ENCODE measurements at regions of chr22 and their contacts with region 1.

Region 1: GRCh38 chr22:38872172-38872830 is at the start of gene CBX6:
- DNase-seq: peak; percentile 97
- ATAC-seq: peak; percentile 55
- H3K4me3 Mint-ChIP-seq: peak within 1 kb of the TSS; percentile 93
- H3K27ac Mint-ChIP-seq: peak within 1 kb of the TSS; percentile 94
- H3K4me1 Mint-ChIP-seq: peaks cover 58% of the 10 kb centered on the region
- H3K27me3 Mint-ChIP-seq: no peaks in the 10 kb centered on the region
- total RNA-seq, gene CBX6: 96.1 to 112 TPM

Region 2: DNA sequence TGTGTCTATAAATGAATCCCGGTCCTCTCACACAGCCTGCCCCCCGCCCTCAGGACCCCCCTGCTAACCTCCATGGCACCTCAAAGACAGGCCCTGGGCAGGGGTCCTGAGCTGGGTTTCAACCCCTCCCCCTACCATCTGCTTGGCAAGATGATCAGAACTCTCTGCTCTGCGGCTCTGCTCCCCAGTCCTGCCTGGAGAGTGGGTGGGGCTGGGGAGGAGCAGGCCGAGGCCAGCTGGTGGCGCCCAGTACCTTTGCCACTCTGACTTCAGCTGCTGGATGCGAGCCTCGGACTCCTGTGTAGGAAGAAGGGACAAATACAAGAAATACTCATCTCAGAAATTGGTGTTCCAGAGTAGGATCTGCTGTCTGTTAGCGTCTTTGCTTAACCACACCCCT is 131.5 kb before region 1 on chr22:
- CTCF ChIA-PET with region 1: no interaction called
- POLR2A ChIA-PET with region 1: no interaction called
- intact Hi-C with region 1: no loop called
- DNase-seq: no peak
- ATAC-seq: no peak
- H3K4me3 Mint-ChIP-seq: no peak overlapping the region
- H3K27ac Mint-ChIP-seq: no peak overlapping the region
- H3K4me1 Mint-ChIP-seq: peaks cover 25% of the 10 kb centered on the region
- H3K27me3 Mint-ChIP-seq: no peaks in the 10 kb centered on the region

Region 3: DNA sequence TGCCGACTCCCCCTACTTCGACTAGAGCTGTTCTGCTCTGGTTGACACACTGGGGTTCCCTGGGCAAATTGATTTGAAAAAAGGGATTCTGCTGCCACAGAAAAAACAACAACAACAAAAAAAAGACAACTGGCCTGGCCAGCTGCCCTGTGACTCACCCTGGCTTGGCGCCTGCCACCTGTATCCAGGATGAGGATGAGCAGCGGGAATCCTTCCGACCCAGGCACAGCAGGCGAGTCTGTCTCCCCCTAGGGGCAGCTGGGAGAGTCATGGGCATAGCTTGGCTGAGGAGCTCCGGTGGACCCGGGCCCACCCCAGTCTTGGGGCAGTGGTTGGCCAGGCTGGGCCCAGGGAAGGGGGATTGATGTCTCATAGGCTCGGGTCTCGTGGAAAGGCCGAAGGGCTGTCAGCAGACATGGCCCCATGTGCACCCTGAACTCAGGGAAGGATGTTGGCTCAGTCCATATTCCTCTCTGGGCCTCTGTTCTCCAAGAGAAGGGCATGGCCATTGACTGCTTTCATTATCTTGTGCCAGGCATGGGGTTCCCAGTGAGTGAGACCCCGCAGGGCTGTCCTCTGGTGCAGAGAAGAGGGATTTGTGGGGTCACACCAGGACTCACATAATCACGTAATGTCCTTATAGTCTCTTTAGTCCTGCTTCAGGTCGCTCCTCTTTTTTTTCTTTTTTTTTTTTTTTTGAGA is 106.1 kb before region 1 on chr22:
- CTCF ChIA-PET with region 1: interaction called, 17 read pairs
- POLR2A ChIA-PET with region 1: no interaction called
- intact Hi-C with region 1: no loop called
- DNase-seq: peak; percentile 60
- ATAC-seq: peak; percentile 38
- H3K4me3 Mint-ChIP-seq: no peak overlapping the region
- H3K27ac Mint-ChIP-seq: no peak overlapping the region
- H3K4me1 Mint-ChIP-seq: peaks cover 4% of the 10 kb centered on the region
- H3K27me3 Mint-ChIP-seq: no peaks in the 10 kb centered on the region

Region 4: DNA sequence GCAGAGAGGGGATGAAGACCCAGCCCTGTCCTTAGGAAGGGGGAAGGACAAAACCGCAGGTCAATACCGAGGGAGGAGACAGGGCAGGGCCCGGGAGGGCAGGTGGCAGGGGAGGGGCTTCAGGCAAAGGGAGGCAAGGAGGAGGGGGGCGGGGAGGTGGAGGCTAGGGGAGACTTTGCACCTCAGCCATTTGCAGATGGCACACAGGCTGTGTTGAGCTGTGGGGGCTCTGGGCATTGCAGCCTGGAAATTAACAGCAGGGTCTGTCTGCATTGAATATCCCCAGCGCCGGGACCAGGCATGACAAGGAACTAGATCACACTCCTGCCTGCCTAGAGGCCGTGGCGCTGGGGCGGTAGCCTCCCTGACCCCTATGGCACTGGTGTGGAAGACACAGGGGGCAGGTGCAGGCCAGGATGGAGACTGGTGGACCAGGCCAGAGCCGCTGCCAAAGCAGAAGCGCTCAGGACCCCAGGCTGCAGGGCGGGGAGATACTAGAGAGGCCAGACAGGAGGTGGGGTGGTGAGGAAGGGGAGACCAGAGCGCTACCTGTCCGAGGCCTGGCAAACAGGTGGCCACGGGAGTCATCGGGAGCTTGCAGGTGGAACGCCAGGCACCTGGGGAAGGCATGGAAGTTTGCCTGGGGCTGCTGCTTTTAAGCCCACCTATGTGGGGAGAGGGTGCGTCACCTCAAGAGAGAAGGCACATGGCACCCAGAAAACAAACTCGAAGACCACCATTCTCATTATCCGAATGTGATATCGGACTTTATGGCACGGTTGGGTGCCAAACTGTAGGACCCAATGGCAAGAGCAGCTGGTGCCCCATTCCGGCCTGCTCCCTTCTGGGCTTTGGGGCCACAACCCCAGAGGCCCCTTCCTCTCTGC is 11.8 kb before region 1 on chr22:
- CTCF ChIA-PET with region 1: interaction called, 26 read pairs
- POLR2A ChIA-PET with region 1: no interaction called
- intact Hi-C with region 1: no loop called
- DNase-seq: no peak
- ATAC-seq: peak; percentile 14
- H3K4me3 Mint-ChIP-seq: no peak overlapping the region
- H3K27ac Mint-ChIP-seq: no peak overlapping the region
- H3K4me1 Mint-ChIP-seq: no peaks in the 10 kb centered on the region
- H3K27me3 Mint-ChIP-seq: no peaks in the 10 kb centered on the region

Region 5: DNA sequence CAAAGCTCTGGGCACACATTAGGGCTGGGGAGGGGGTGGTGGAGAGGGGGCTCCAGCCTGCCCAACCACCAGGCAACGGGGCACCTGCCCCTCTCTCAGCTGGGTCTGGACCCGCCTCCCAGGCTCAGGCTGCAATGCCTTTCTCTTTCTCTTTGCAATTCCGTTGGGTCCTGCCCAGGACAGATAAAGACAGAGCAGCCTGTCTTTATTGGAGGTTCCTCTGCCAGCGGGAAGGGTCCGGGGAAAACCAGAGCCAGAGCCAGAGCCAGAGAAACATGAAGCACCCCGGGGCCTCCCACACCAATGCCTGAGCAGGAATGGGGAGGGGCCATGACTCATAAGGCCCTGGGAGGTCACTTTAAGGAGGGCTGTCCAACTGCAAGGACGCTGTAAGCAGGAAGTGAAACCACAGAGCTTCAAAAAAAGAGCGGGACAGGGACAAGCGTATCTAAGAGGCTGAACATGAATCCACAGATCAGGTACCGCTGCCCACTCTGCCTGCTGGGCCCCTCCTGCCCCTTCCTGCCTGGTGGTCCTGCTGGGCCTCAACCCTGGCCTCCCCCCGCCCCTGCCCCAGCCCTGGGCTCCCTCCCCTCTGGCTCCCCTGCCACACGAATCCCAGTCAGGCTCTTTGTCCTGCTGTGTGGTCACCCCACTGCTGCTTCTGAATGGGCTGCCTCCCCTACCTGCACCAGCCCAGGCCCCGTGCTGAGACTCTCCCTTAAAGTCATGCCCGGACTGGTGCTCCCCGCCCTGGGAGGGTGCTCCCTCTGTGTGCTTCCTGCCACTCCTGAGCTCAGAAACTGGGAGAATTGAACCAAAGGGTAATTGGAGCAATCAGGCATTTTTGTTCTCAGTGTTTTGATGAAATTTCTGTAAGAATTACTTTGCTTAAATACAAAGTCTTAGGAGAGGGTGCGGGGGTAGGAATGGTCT is 110.0 kb after region 1 on chr22 and contains the start of gene APOBEC3B:
- CTCF ChIA-PET with region 1: interaction called, 22 read pairs
- POLR2A ChIA-PET with region 1: interaction called, 4 read pairs
- intact Hi-C with region 1: loop called (anchors 1 kb)
- DNase-seq: peak; percentile 82
- ATAC-seq: peak; percentile 57
- H3K4me3 Mint-ChIP-seq: peak within 1 kb of the TSS; percentile 55
- H3K27ac Mint-ChIP-seq: peak within 1 kb of the TSS; percentile 74
- H3K4me1 Mint-ChIP-seq: peaks cover 53% of the 10 kb centered on the region
- H3K27me3 Mint-ChIP-seq: peaks cover 3% of the 10 kb centered on the region
- total RNA-seq, gene APOBEC3B: 8.0 to 8.5 TPM

Region 6: GRCh38 chr22:39080052-39080762 is 207.9 kb after region 1 on chr22:
- CTCF ChIA-PET with region 1: no interaction called
- POLR2A ChIA-PET with region 1: no interaction called
- intact Hi-C with region 1: loop called in 1 of 2 experiments (anchors 5 kb)
- DNase-seq: peak; percentile 4
- ATAC-seq: no peak
- H3K4me3 Mint-ChIP-seq: no peak overlapping the region
- H3K27ac Mint-ChIP-seq: no peak overlapping the region
- H3K4me1 Mint-ChIP-seq: peaks cover 39% of the 10 kb centered on the region
- H3K27me3 Mint-ChIP-seq: no peaks in the 10 kb centered on the region

Region 7: DNA sequence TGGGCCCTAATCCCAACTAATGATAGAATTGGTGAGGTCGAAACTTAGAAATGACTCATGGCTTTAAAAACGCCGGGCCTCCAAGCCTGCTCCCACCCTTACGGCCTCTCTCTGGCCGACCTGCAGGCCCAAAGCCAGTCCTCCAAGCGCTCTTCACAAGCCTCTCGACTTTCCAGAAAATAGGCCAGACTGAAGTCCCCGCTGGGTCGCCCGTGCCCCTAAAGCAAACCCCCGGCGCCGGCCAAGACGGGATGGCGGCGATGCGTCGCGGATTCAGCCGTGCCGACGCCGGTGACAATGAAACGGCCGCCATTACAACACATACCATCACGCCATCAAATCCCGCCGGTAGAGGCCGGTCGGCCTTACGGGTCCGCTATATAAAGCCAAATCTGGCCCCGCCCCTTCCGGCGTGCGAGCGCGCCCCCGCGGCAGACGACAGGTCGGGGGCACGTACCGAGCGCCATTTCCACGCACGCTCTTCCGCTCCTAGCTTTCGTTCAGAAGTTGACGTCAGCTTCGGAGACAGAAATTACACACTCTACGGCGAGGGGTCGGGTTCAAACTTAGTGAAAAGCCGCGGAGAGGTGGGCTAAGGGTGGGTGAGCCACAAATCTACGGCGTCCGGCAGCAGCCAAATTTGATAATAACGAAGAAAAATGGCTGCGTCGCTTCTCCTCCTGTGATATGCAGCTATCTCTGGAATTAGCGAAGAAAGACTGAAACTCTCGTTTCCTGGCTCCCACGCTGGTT is 447.1 kb after region 1 on chr22 and contains the start of gene RPL3:
- CTCF ChIA-PET with region 1: interaction called, 3 read pairs
- POLR2A ChIA-PET with region 1: interaction called, 10 read pairs
- intact Hi-C with region 1: loop called (anchors 1 to 5 kb)
- DNase-seq: peak; percentile 98
- ATAC-seq: peak; percentile 83
- H3K4me3 Mint-ChIP-seq: peak within 1 kb of the TSS; percentile 100
- H3K27ac Mint-ChIP-seq: peak within 1 kb of the TSS; percentile 100
- H3K4me1 Mint-ChIP-seq: peaks cover 32% of the 10 kb centered on the region
- H3K27me3 Mint-ChIP-seq: no peaks in the 10 kb centered on the region
- total RNA-seq, gene RPL3: 2,519 to 3,155 TPM

Measured in activated CD4-positive, alpha-beta T cell treated with anti-CD3 and anti-CD28 coated beads for 36 hours (primary cell).